PC-9 (cell line): ENCODE measurements at regions of chr1 and their contacts with region 1.

Region 1: GRCh38 chr1:201170533-201171062 is 16.3 kb upstream of the TMEM9 start:
- DNase-seq: peak; percentile 94 to 98
- H3K4me3 ChIP-seq: peak overlapping the region; percentile 66
- H3K27ac ChIP-seq: peak overlapping the region; percentile 82
- H3K4me1 ChIP-seq: peaks cover 42% of the 10 kb centered on the region
- H3K27me3 ChIP-seq: no peaks in the 10 kb centered on the region
- CTCF ChIP-seq: no peak

Region 2: GRCh38 chr1:201191653-201192260 is 21.2 kb after region 1 on chr1:
- CTCF ChIA-PET with region 1: no interaction called
- POLR2A ChIA-PET with region 1: no interaction called
- intact Hi-C with region 1: loop called (anchors 1 kb)
- DNase-seq: peak; percentile 27 to 52
- H3K4me3 ChIP-seq: no peak overlapping the region
- H3K27ac ChIP-seq: no peak overlapping the region
- H3K4me1 ChIP-seq: peaks cover 21% of the 10 kb centered on the region
- H3K27me3 ChIP-seq: no peaks in the 10 kb centered on the region
- CTCF ChIP-seq: no peak